ENCODE measurements at regions of chr2 and their contacts with region 1.

Region 1: GRCh38 chr2:203814661-203815540 is 52.7 kb upstream of the CTLA4 start:
- DNase-seq: peak; percentile 21 to 41 (median 31)
- H3K4me3 ChIP-seq: no peak overlapping the region
- H3K27ac ChIP-seq: no peak overlapping the region
- H3K4me1 ChIP-seq: no peaks in the 10 kb centered on the region
- H3K27me3 ChIP-seq: no peaks in the 10 kb centered on the region
- CTCF ChIP-seq: peak in 2 of 3 donors; percentile 53 to 70
- EP300 ChIP-seq: no peak
- POLR2A ChIP-seq: no peak

Region 2: DNA sequence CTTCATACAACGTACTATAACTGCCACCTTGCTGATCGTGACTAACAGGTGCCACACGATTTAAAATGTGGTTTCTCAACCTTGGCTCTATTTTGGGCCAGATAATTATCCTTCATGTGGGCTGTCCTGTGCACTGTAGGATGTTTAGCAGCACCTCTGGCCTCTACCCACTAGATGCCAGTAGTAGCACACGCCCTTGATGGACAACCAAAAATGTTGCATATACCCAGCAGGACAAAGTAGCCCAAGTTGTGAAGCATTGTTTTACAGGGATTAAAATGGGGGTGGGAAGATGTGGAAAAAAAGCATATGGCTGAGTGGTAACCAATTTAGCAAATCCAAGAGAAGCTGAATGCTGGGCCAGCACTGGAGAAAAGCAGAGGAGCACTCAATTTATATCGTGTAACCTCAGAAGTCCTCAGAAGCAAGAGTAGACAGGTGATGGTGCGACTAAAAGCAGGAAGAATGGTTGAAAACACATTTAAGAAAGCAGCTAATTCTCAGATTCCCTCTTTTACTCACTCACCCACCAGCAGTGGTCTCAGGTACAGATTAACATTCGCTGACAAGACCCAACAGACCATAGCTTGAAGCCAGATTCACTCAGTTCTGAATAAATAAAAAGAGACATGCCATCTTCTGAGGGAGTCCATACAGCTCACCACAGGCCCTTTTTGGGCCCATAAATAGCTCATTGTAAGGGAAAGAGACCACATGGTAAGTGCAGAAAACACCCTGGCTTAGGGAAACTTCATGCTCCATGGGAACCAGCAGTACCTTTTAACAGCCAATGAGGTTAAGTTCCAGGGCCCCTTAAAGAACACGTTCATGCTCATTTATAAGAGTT is 330.4 kb before region 1 on chr2:
- intact Hi-C with region 1: loop called in 1 of 4 experiments (anchors 10 kb)
- DNase-seq: no peak
- H3K4me3 ChIP-seq: no peak overlapping the region
- H3K27ac ChIP-seq: no peak overlapping the region
- H3K4me1 ChIP-seq: no peaks in the 10 kb centered on the region
- H3K27me3 ChIP-seq: no peaks in the 10 kb centered on the region
- CTCF ChIP-seq: no peak
- EP300 ChIP-seq: no peak
- POLR2A ChIP-seq: no peak

Region 3: DNA sequence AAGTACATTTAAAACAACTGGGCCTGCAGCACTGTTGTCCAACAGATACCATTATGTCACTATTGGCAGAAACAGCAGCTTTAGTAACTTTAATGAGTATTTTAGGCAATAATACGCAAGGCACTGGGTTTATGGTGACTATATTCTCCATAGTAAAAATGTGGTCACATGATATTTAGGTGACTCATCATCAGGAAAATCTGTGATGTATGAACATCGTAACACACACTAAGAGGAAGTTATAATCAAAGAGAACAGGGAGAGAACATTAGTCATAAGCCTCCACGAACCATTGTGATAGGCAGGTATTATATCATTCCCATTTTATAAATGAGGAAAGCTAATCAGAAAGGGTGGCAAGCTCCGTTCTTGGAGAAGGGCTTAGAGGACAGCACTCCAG is 316.7 kb before region 1 on chr2:
- intact Hi-C with region 1: loop called in 1 of 4 experiments (anchors 10 kb)
- DNase-seq: no peak
- H3K4me3 ChIP-seq: no peak overlapping the region
- H3K27ac ChIP-seq: no peak overlapping the region
- H3K4me1 ChIP-seq: no peaks in the 10 kb centered on the region
- H3K27me3 ChIP-seq: no peaks in the 10 kb centered on the region
- CTCF ChIP-seq: no peak
- EP300 ChIP-seq: no peak
- POLR2A ChIP-seq: no peak

Region 4: GRCh38 chr2:203751685-203752271 is 63.1 kb before region 1 on chr2:
- intact Hi-C with region 1: no loop called
- DNase-seq: no peak
- H3K4me3 ChIP-seq: no peak overlapping the region
- H3K27ac ChIP-seq: no peak overlapping the region
- H3K4me1 ChIP-seq: no peaks in the 10 kb centered on the region
- H3K27me3 ChIP-seq: no peaks in the 10 kb centered on the region
- CTCF ChIP-seq: no peak
- EP300 ChIP-seq: no peak
- POLR2A ChIP-seq: no peak

Measured in ovary (tissue), 10 donors.